Activated CD4-positive, alpha-beta T cell treated with anti-CD3 and anti-CD28 coated beads for 36 hours (primary cell): ENCODE measurements at regions of chr4 and their contacts with region 1.

Region 1: DNA sequence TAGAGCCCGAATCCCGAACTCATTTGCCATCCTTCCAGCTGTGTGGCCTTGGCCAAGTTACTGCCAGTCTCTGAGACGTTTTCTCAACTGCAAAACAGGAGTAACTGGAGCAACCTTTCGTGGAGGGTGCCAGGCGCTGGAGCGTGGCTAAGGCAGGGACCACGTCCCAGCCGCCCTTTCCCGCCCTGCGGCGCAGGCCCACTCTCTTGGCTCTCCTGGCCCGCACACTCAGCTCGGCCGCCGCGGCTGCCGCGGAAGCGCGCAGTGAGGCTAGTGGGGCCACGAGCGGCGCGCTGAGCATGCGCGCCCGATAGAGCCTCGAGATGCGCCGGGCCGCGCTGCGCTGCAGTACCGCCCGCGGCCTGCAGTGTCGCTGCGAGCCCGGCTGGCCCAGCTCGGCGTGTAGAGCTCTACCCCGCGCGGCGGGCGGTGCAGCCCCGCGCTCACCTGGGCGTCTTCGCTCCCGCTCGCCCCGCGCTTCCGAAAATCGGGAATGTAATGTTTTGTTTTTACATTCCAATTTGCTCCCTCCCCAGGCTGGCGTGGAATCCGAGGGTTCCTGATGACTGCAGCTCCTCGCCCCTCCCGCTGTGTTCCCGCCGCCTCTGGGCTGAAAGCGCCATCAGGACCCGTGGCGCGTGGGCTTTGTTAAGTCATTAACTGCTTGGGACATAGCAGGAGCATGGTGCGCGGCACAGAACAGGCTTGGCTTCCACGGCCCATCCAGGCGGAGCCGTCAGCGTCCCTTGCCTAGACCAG is 4.0 kb upstream of the ZNF518B start:
- DNase-seq: peak; percentile 87
- ATAC-seq: peak; percentile 84
- H3K4me3 Mint-ChIP-seq: peak overlapping the region; percentile 75
- H3K27ac Mint-ChIP-seq: no peak overlapping the region
- H3K4me1 Mint-ChIP-seq: peaks cover 25% of the 10 kb centered on the region
- H3K27me3 Mint-ChIP-seq: peaks cover 39% of the 10 kb centered on the region

Region 2: DNA sequence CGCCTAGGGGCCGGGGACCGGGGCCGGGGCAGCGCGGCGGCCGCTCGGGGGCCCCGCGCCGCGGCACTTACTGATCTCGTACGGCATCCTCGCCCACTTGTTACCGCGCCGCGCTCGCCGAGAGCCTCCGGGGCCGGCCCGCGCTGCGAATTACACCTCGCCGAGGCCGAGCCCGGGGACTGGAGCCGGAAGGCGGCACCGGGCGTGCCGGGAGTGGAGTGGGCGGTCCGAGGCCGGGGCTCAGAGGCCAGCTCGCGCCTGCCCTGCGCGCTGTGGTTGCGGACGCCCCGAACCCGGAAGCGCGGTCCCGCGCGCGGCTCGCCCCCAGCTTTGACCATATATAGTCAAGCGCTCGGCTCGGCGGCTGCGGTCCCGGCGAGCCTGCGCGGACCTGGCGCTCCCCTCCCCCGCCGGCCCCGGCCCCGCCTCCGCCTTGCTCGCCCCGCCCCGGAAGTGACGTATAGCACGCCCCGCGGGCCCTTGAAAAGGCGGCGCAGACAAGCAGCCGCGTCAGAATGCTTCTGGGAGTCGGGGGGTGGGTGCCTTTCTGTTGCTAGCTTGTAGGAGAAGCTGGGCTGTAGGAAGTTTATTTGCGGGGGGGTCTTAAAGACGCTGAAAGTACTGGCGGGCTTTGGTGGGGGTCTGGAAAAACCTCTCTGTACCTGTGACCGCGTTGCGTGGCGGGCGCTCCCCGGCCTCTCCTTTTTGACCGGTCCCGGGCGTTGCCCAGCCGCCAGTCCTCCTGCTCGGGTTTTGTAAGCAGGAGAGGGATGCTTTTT is 344.5 kb before region 1 on chr4 and contains the start of gene WDR1:
- CTCF ChIA-PET with region 1: interaction called, 6 read pairs
- POLR2A ChIA-PET with region 1: interaction called, 5 read pairs
- intact Hi-C with region 1: loop called (anchors 1 to 2 kb)
- DNase-seq: peak; percentile 93
- ATAC-seq: peak; percentile 79
- H3K4me3 Mint-ChIP-seq: peak within 1 kb of the TSS; percentile 96
- H3K27ac Mint-ChIP-seq: peak within 1 kb of the TSS; percentile 100
- H3K4me1 Mint-ChIP-seq: peaks cover 73% of the 10 kb centered on the region
- H3K27me3 Mint-ChIP-seq: no peaks in the 10 kb centered on the region
- total RNA-seq, gene WDR1: 308 to 354 TPM

Region 3: DNA sequence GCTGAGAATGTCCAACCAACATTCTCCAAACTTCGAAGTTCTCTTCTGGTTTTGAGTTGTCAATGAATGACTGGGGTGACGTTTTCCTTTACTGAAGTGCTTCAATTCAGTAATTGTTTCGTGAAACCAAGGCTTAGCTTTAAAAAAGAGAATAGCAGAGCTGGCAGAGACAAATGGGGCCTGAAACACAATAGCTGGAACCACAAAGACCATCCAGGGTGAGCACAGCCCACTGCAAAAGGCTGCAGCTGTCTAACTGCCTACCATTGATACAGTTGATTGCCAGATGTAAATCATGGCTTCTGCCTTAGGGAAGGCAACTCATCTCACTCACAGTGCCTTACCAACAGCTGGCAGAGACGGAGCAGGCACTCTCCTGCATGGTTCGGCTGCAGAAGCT is 74.6 kb after region 1 on chr4:
- CTCF ChIA-PET with region 1: interaction called, 20 read pairs
- POLR2A ChIA-PET with region 1: no interaction called
- intact Hi-C with region 1: loop called (anchors 1 to 5 kb)
- DNase-seq: no peak
- ATAC-seq: no peak
- H3K4me3 Mint-ChIP-seq: no peak overlapping the region
- H3K27ac Mint-ChIP-seq: no peak overlapping the region
- H3K4me1 Mint-ChIP-seq: no peaks in the 10 kb centered on the region
- H3K27me3 Mint-ChIP-seq: no peaks in the 10 kb centered on the region

Region 4: DNA sequence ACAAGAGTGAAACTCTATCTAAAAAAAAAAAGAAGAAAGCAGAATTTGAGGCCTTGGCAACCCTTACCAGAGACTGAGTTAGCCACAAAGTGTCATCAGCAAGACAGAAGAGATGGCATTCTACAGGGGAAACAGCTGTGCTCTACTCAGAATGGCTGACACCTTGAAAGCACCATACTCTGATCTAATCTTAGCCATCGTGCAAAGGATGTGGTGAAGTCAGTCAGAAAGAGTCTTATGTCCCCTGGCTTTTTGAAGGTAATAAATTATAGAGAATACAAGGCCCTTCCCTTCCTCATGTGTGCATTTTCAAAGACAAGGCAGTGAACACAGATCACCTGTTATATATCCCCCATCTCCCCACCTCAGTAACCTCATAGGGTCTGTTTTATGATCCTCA is 210.1 kb after region 1 on chr4:
- CTCF ChIA-PET with region 1: no interaction called
- POLR2A ChIA-PET with region 1: no interaction called
- intact Hi-C with region 1: loop called in 1 of 2 experiments (anchors 10 kb)
- DNase-seq: peak; percentile 28
- ATAC-seq: peak; percentile 95
- H3K4me3 Mint-ChIP-seq: no peak overlapping the region
- H3K27ac Mint-ChIP-seq: peak overlapping the region; percentile 59
- H3K4me1 Mint-ChIP-seq: peaks cover 26% of the 10 kb centered on the region
- H3K27me3 Mint-ChIP-seq: no peaks in the 10 kb centered on the region

Region 5: DNA sequence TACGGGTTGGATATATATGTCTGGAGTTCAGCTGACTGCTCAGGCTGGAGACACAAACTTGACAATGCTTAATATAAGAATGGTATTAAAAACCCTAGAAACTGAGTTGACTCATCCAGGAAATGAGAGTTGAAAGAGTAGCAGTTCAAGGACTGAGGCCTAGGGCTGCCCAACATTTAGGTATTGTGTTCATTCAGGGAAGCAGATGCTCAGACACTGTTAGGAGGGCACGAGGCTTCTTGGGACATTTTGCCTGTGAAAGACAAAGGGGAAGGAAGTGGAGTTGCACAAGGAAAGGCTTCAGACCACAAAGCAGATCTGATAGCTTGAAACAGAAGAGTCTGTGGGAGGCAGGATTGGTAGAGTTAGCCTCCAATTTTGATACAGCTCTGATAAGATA is 1019.4 kb after region 1 on chr4:
- CTCF ChIA-PET with region 1: interaction called, 3 read pairs
- POLR2A ChIA-PET with region 1: no interaction called
- intact Hi-C with region 1: loop called in 1 of 2 experiments (anchors 10 kb)
- DNase-seq: peak; percentile 27
- ATAC-seq: peak; percentile 89
- H3K4me3 Mint-ChIP-seq: no peak overlapping the region
- H3K27ac Mint-ChIP-seq: no peak overlapping the region
- H3K4me1 Mint-ChIP-seq: peaks cover 14% of the 10 kb centered on the region
- H3K27me3 Mint-ChIP-seq: no peaks in the 10 kb centered on the region